Right ventricle myocardium inferior (tissue), 1 donor: ENCODE measurements at regions of chr9 and their contacts with region 1.

Region 1: GRCh38 chr9:13929013-13929412 is 384.9 kb downstream of the NFIB start:
- DNase-seq: no peak
- ATAC-seq: no peak

Region 2: GRCh38 chr9:13661014-13661413 is 268.0 kb before region 1 on chr9:
- intact Hi-C with region 1: no loop called
- DNase-seq: no peak
- ATAC-seq: no peak

Region 3: DNA sequence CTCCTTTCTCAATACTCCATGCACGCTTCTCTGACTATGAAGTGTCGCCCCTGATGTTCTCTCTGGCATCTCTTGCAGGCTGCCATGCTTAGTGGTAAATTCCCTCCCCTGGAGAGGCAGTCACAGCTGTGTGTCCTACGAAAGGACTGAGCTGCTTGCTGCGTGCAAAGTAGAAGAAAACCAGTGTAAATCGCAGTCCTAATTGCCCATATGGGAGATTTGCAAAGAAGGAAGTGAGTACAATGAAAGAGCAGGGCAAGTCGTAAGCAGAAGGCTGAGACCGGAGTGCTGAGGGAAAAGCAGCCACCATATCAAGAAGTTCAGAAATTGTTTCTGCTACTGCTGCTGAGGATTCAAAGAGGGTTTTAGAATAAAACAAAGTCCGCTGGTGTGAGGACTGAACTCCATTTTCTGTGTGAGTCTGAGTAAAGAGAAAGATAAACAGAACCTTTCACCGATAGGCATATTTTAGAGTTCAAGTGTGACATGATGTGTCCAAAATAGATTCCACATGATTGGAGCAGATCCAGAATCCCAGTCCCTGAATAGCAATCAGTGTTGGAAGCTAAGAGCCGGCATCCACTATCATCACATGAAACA is 141.7 kb before region 1 on chr9:
- intact Hi-C with region 1: loop called (anchors 10 kb)
- DNase-seq: no peak
- ATAC-seq: peak; percentile 82